Cardiac septum (tissue), 1 donor: ENCODE measurements at regions of chr11 and their contacts with region 1.

Region 1: GRCh38 chr11:103806130-103806900 is 230.1 kb upstream of the DDI1 start:
- DNase-seq: no peak

Region 2: GRCh38 chr11:103851166-103851651 is 44.9 kb after region 1 on chr11:
- intact Hi-C with region 1: loop called (anchors 10 kb)
- DNase-seq: no peak

Region 3: GRCh38 chr11:104164028-104164520 is 357.8 kb after region 1 on chr11 and contains the start of gene PDGFD:
- intact Hi-C with region 1: loop called (anchors 5 kb)
- DNase-seq: peak; percentile 81
- total RNA-seq, gene PDGFD: 19.6 TPM